CD4-positive, alpha-beta T cell (primary cell): ENCODE measurements at regions of chr19 and their contacts with region 1.

Region 1: DNA sequence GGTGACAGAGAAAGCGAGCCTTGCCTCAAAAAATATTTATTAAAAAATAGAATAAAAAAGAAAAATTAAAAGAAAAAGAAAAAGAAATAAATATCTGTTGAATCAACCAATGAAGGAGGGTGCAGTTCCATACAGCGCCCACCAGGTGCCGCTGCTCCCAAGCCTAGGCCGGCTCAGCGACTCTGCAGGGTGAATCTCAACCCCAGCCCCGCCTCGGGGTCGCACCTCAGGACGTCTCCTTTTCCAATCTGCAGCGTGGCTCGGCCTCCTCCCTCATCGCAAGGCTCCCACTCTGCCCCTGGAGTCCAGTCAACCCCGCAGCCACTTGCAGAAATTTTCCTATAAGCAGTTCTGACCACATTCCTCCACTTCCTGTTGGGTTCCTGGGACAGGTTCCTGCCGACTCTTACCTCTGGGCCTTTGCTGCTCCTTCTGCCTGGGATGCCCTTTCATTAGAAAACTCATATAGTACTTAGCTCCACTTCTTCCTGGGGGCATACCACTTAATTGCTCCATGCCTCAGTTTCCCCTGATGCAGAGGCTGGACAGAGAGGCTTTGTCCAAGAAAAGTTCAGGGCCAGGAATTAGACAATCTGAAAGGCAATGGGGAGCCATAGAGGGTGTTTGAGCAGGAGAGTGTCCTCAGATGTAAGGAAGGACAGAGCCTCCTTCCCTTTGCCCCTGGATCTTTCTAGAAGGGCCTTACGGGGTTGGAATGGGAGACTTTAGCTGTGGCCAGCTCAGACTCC is 24.3 kb downstream of the NFILZ start:
- DNase-seq: peak; percentile 44 to 85 (median 64)
- ATAC-seq: peak; percentile 87
- H3K4me3 ChIP-seq: peak overlapping the region; percentile 19
- H3K4me3 Mint-ChIP-seq: peak overlapping the region; percentile 58
- H3K27ac ChIP-seq: no peak overlapping the region
- H3K27ac Mint-ChIP-seq: no peak overlapping the region
- H3K4me1 ChIP-seq: peaks cover 25% of the 10 kb centered on the region
- H3K4me1 Mint-ChIP-seq: peaks cover 13% of the 10 kb centered on the region
- H3K27me3 ChIP-seq: no peaks in the 10 kb centered on the region
- H3K27me3 Mint-ChIP-seq: no peaks in the 10 kb centered on the region
- CTCF ChIP-seq: peak; percentile 99

Region 2: GRCh38 chr19:8697671-8698432 is 43.1 kb after region 1 on chr19:
- CTCF ChIA-PET with region 1: interaction called, 25 read pairs
- POLR2A ChIA-PET with region 1: interaction called, 10 read pairs
- intact Hi-C with region 1: loop called (anchors 1 kb)
- DNase-seq: peak in 4 of 14 experiments; percentile 10 to 36 (median 18)
- ATAC-seq: no peak
- H3K4me3 ChIP-seq: no peak overlapping the region
- H3K4me3 Mint-ChIP-seq: no peak overlapping the region
- H3K27ac ChIP-seq: no peak overlapping the region
- H3K27ac Mint-ChIP-seq: no peak overlapping the region
- H3K4me1 ChIP-seq: peaks cover 50% of the 10 kb centered on the region
- H3K4me1 Mint-ChIP-seq: peaks cover 36% of the 10 kb centered on the region
- H3K27me3 ChIP-seq: no peaks in the 10 kb centered on the region
- H3K27me3 Mint-ChIP-seq: peaks cover 12% of the 10 kb centered on the region
- CTCF ChIP-seq: no peak

Region 3: DNA sequence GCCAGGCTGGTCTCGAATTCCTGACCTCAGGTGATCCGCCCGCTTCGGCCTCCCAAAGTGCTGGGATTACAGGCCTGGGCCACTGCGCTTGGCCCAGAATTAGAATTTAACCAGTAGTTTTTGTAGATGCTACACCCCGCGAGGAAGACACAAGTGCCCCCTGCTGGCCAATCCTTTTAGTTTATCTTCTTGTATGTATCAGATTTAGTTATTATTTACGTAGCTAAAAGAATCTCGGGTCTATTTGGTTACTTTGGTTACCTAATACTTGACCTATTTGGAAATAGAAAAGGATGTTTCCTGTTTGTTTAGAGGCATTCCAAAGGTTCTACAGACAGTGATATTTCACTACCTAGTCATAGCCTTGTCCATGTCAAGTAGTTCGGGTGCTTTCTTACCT is 333.4 kb after region 1 on chr19:
- CTCF ChIA-PET with region 1: no interaction called
- POLR2A ChIA-PET with region 1: no interaction called
- intact Hi-C with region 1: loop called in 1 of 2 experiments (anchors 10 kb)
- DNase-seq: peak in 5 of 14 experiments; percentile 6 to 45 (median 30)
- ATAC-seq: no peak
- H3K4me3 ChIP-seq: no peak overlapping the region
- H3K4me3 Mint-ChIP-seq: no peak overlapping the region
- H3K27ac ChIP-seq: no peak overlapping the region
- H3K27ac Mint-ChIP-seq: no peak overlapping the region
- H3K4me1 ChIP-seq: no peaks in the 10 kb centered on the region
- H3K4me1 Mint-ChIP-seq: no peaks in the 10 kb centered on the region
- H3K27me3 ChIP-seq: no peaks in the 10 kb centered on the region
- H3K27me3 Mint-ChIP-seq: no peaks in the 10 kb centered on the region
- CTCF ChIP-seq: no peak

Region 4: GRCh38 chr19:9075064-9075949 is 420.5 kb after region 1 on chr19:
- CTCF ChIA-PET with region 1: no interaction called
- POLR2A ChIA-PET with region 1: no interaction called
- intact Hi-C with region 1: loop called (anchors 1 kb)
- DNase-seq: no peak
- ATAC-seq: no peak
- H3K4me3 ChIP-seq: no peak overlapping the region
- H3K4me3 Mint-ChIP-seq: no peak overlapping the region
- H3K27ac ChIP-seq: no peak overlapping the region
- H3K27ac Mint-ChIP-seq: no peak overlapping the region
- H3K4me1 ChIP-seq: peaks cover 5% of the 10 kb centered on the region
- H3K4me1 Mint-ChIP-seq: no peaks in the 10 kb centered on the region
- H3K27me3 ChIP-seq: no peaks in the 10 kb centered on the region
- H3K27me3 Mint-ChIP-seq: no peaks in the 10 kb centered on the region
- CTCF ChIP-seq: no peak